ENCODE measurements at regions of chr12 and their contacts with region 1.

Region 1: DNA sequence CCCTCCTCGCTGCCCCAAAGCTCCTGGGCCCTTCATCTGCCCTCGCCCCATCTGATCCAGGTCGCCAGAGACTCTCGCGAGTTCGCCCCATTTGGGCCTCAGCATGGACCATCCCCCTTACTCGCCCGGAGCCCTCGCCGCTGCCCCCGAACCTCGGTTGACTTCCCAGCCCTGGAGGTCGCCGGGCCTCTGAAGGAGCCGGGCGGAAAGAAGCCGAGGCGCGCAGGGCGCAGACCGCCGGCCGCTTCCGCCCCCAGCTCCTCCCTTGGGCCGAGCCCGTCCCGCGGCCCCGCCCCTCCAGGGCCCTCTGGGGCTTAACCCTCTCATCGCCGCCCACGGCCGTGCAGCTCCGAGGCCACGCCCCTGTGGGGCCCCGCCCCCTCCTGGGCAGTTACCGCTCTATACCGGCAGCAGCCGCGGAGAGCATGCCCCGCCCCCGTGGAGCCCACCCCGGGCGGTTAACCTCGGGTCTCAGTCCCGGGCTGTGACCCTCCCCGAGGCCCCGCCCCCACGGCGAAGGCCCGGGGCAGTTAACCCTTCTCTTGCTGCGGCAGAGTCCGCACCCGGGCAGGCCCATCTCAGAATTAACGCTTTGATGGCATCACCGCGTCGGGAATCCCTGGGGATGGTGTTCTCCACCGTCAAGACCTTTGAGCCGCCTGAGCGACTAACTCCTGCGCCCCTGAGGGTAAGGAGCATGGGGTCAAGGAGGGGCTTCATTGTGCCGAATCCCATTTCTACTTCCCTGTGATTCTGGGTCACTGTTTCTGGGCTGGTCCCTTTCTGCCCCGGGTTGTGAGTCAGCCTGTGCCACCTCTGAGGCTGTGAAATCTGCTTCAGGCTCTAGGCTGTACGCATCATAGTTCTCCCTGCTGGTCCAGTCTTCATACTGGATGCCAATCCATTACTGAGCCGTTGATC is at the start of gene SPSB2:
- DNase-seq: peak; percentile 97
- H3K4me3 ChIP-seq: peak within 1 kb of the TSS; percentile 64 to 91
- H3K27ac ChIP-seq: peak within 1 kb of the TSS; percentile 69 to 84
- H3K4me1 ChIP-seq: peaks cover 30 to 39% of the 10 kb centered on the region in 2 experiments
- H3K27me3 ChIP-seq: no peaks in the 10 kb centered on the region
- CTCF ChIP-seq: no peak
- EP300 ChIP-seq: 0 out of 4 replicates have a peak, but pooled peaks of 1 of the 2 experiments have one; percentile 30
- RAD21 ChIP-seq: no peak
- polyA plus RNA-seq, gene SPSB2: 16.9 and 19.6 TPM in 2 replicates

Region 2: GRCh38 chr12:6825398-6826124 is 47.8 kb before region 1 on chr12:
- CTCF ChIA-PET with region 1: interaction called, 85 read pairs
- POLR2A ChIA-PET with region 1: interaction called, 4 read pairs
- DNase-seq: peak; percentile 92
- H3K4me3 ChIP-seq: peak overlapping the region in 1 of 2 experiments; percentile 50; a peak in 2 of 4 replicates
- H3K27ac ChIP-seq: peak overlapping the region in 1 of 2 experiments; percentile 35; a peak in 1 of 4 replicates
- H3K4me1 ChIP-seq: peaks cover 23 to 60% of the 10 kb centered on the region in 2 experiments; a peak in 3 of 4 replicates
- H3K27me3 ChIP-seq: no peaks in the 10 kb centered on the region
- CTCF ChIP-seq: peak; percentile 88
- EP300 ChIP-seq: no peak; a peak in 1 of 4 replicates
- RAD21 ChIP-seq: peak; percentile 94

Region 3: DNA sequence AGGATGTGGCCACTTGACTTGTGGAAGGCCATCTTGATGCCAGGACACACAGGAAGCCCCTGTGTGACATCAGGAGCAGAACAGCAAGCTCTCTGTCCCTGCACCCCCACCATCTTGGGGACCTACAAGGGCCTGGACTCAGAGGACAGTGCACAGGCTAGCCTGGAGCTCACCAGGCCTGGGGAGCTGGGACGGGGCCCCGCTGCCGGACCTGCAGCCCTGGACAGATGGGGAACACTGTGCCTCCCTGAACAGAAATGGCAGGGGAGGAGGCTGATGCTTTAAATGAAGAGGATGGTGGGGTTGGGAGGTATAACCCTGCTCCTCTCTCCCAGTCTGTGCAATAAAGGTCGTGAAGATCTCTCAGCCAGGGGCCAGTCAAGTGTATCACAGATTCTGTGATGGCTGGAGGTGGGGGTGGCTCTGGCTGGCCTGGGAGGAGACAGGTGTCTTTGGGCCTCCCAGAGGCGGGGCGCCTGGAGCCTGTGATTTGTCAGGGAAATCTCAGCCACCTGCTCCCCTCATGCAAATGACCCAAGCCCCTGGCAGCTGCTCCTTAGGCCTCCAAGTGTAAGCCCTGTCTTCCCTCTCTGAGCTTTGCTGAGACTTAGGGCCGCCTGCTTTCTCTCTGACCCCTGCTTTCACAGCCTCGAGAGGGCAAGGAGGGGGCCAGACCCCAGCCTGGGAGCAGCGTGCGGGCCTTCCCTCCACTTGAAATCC is 33.7 kb before region 1 on chr12:
- CTCF ChIA-PET with region 1: interaction called, 30 read pairs
- POLR2A ChIA-PET with region 1: interaction called, 9 read pairs
- DNase-seq: no peak
- H3K4me3 ChIP-seq: no peak overlapping the region
- H3K27ac ChIP-seq: no peak overlapping the region
- H3K4me1 ChIP-seq: no peaks in the 10 kb centered on the region
- H3K27me3 ChIP-seq: no peaks in the 10 kb centered on the region
- CTCF ChIP-seq: no peak
- EP300 ChIP-seq: no peak
- RAD21 ChIP-seq: no peak

Region 4: DNA sequence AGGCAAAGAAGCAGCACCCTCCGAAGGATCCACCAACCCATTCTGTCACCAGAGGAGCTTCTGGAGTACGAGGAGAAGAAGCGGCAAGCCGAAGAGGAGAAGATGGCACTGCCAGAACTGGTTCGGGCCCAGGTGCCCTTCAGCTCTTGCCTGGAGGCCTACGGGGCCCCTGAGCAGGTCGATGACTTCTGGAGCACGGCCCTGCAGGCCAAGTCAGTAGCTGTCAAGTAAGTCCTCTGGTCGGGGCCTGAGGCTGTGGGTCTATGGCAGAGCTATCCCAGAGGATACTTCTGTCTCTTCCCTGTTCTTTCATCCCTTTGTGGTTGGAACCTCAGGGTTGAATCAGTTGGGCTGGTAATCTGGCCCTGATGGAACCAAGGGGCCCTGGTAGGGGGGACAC is 12.0 kb before region 1 on chr12:
- CTCF ChIA-PET with region 1: interaction called, 164 read pairs
- POLR2A ChIA-PET with region 1: interaction called, 3 read pairs
- DNase-seq: no peak
- H3K4me3 ChIP-seq: no peak overlapping the region
- H3K27ac ChIP-seq: no peak overlapping the region
- H3K4me1 ChIP-seq: peaks cover 0 to 1% of the 10 kb centered on the region in 2 experiments; a peak in 2 of 4 replicates
- H3K27me3 ChIP-seq: no peaks in the 10 kb centered on the region
- CTCF ChIP-seq: no peak
- EP300 ChIP-seq: no peak
- RAD21 ChIP-seq: no peak

Region 5: DNA sequence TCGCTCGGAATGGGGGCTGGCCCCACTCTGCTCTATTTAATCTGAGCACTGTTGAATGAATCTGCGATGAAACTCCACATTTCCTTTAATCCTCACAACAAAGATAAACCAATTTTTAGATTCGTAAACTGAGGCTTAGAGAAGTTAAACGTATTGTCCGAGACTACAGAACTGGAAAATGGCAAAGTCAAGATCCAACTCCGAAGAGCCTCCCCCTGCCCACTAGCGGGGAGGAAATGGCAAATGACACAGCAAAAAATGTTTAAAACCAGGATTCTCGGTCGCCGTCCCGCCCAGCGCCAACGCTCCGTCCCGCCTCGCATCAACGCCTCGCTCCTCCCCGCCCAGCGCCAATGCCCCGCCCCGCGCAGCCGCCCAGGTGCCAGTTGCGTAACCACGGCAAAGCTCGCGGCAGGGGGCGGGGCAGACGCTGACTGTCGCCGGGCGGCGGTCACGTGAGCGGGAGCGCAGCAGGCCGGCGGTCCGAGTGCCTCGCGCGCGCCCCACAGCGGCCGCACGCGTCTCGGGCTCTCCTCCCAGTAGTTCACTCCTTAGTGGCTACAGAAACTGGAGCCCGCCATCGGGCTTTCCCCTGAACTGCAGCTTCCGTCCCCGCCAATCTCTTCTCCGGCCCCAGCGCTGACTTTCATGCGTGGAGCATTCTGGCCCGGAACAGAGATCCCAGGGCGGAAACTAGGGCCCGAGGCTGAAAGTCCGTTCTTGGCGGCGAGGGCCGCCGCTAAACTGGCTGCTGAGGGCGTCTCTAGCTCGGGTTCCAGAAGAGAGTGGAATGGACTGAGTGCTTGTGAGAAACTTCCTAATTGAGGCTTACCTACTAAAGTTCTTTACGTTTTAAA is 17.7 kb after region 1 on chr12:
- CTCF ChIA-PET with region 1: interaction called, 122 read pairs
- POLR2A ChIA-PET with region 1: interaction called, 24 read pairs
- DNase-seq: peak; percentile 98
- H3K4me3 ChIP-seq: peak overlapping the region; percentile 44 to 63
- H3K27ac ChIP-seq: peak overlapping the region; percentile 89 to 96
- H3K4me1 ChIP-seq: peaks cover 6 to 9% of the 10 kb centered on the region in 2 experiments; a peak in 3 of 4 replicates
- H3K27me3 ChIP-seq: no peaks in the 10 kb centered on the region
- CTCF ChIP-seq: peak; percentile 79
- EP300 ChIP-seq: 0 out of 4 replicates have a peak, but pooled peaks of 1 of the 2 experiments have one; percentile 16
- RAD21 ChIP-seq: peak; percentile 58

Region 6: DNA sequence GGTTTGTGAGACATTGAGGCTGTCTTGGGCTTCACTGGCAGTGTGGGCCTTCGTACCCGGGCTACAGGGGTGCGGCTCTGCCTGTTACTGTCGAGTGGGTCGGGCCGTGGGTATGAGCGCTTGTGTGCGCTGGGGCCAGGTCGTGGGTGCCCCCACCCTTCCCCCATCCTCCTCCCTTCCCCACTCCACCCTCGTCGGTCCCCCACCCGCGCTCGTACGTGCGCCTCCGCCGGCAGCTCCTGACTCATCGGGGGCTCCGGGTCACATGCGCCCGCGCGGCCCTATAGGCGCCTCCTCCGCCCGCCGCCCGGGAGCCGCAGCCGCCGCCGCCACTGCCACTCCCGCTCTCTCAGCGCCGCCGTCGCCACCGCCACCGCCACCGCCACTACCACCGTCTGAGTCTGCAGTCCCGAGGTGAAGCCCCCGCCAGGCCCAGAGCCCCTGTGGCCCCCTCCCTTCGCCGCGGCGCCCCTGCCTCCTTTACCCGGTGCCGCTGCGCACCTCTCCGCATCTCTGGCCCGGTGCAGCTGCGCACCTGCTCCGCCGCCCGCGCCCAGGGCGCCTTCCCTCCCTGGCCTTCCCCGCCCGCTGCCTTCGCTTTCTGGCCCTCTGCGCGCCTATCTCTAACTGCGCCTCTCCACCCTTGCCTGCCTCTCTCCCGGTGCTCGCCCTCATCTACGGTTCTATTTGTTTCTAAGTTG is 41.0 kb after region 1 on chr12 and contains the start of gene ENO2:
- CTCF ChIA-PET with region 1: interaction called, 14 read pairs
- POLR2A ChIA-PET with region 1: interaction called, 11 read pairs
- DNase-seq: peak; percentile 91
- H3K4me3 ChIP-seq: peak within 1 kb of the TSS; percentile 69 to 92
- H3K27ac ChIP-seq: peak within 1 kb of the TSS; percentile 49 to 82
- H3K4me1 ChIP-seq: peaks cover 14 to 18% of the 10 kb centered on the region in 2 experiments; a peak in 2 of 4 replicates
- H3K27me3 ChIP-seq: no peaks in the 10 kb centered on the region
- CTCF ChIP-seq: no peak
- EP300 ChIP-seq: no peak; a peak in 1 of 4 replicates
- RAD21 ChIP-seq: no peak
- polyA plus RNA-seq, gene ENO2: 50.6 and 56.9 TPM in 2 replicates

Region 7: DNA sequence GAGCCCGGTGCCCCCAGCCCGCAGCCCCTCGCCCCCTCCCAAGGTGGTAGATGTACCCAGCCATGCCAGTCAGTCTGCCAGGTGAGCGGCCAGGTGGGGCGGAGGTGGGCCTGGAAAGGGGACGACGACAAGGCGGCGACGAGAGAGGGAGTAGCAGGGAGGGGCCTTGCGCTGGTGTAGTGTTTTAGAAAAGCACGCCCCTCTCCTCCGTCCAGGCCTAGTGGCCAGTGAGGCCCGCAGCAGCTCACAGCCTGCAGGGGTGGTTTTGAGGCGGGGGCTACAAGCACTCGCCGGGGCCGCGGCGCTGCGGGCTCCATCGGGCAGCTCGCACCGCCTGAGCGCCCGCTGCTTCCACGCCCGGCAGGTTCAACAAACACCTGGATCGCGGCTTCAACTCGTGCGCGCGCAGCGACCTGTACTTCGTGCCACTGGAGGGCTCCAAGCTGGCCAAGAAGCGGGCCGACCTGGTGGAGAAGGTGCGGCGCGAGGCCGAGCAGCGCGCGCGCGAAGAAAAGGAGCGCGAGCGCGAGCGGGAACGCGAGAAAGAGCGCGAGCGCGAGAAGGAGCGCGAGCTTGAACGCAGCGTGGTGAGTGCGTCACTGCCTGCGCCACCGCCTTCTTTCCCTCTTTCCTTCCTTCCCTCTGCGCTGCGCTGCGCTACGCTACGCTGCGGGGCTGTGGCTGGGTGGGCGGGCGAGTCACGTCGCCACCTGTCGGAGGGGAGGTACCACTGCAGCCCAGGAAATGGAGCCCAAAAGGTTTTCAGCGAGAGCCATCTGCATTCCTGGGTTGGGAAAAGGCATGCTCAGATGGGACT is 64.3 kb after region 1 on chr12:
- CTCF ChIA-PET with region 1: interaction called, 54 read pairs
- POLR2A ChIA-PET with region 1: interaction called, 8 read pairs
- DNase-seq: peak; percentile 92
- H3K4me3 ChIP-seq: peak overlapping the region; percentile 53 to 66; a peak in 3 of 4 replicates
- H3K27ac ChIP-seq: peak overlapping the region; percentile 60 to 90
- H3K4me1 ChIP-seq: peaks cover 0 to 18% of the 10 kb centered on the region in 2 experiments; a peak in 2 of 4 replicates
- H3K27me3 ChIP-seq: no peaks in the 10 kb centered on the region
- CTCF ChIP-seq: peak; percentile 88
- EP300 ChIP-seq: 0 out of 4 replicates have a peak, but pooled peaks of 1 of the 2 experiments have one; percentile 23
- RAD21 ChIP-seq: peak; percentile 53

Region 8: DNA sequence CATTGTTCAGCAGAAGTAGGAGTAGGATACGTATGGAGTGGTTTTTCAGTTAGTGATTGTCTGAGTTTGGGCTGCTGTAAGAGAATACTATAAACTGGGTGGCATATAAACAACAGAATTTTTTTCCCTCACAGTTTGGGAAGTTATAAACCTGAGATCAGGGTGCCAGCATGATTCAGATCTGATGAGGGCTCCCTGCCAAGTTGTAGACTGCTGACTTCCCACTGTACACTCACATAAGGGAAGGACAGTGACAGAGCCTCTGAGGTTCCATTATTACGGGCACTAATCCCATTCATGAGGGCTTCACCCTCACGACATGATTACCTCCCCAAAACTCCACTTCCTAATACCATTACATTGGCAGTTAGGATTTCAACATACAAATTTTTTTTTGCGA is 481.2 kb after region 1 on chr12:
- CTCF ChIA-PET with region 1: no interaction called
- POLR2A ChIA-PET with region 1: no interaction called
- DNase-seq: no peak
- H3K4me3 ChIP-seq: no peak overlapping the region
- H3K27ac ChIP-seq: no peak overlapping the region
- H3K4me1 ChIP-seq: 0 out of 4 replicates have a peak, but pooled peaks cover 0 to 4% of the 10 kb centered on the region in 2 experiments
- H3K27me3 ChIP-seq: no peaks in the 10 kb centered on the region
- CTCF ChIP-seq: no peak
- EP300 ChIP-seq: no peak
- RAD21 ChIP-seq: no peak

Measured in SK-N-SH (cell line).